Dendritic cell treated with granulocyte-macrophage colony-stimulating factor and Interleukin-4, amounts not matched to agents 40 ng/mL and 50 ng/mL, for 4 days (primary cell): ENCODE measurements at regions of chr19 and their contacts with region 1.

Region 1: GRCh38 chr19:36850559-36851442 is at the start of gene ZNF345:
- H3K4me3 Mint-ChIP-seq: no peak within 1 kb of the TSS
- H3K27ac Mint-ChIP-seq: no peak within 1 kb of the TSS
- H3K4me1 Mint-ChIP-seq: peaks cover 6% of the 10 kb centered on the region
- H3K27me3 Mint-ChIP-seq: no peaks in the 10 kb centered on the region

Region 2: DNA sequence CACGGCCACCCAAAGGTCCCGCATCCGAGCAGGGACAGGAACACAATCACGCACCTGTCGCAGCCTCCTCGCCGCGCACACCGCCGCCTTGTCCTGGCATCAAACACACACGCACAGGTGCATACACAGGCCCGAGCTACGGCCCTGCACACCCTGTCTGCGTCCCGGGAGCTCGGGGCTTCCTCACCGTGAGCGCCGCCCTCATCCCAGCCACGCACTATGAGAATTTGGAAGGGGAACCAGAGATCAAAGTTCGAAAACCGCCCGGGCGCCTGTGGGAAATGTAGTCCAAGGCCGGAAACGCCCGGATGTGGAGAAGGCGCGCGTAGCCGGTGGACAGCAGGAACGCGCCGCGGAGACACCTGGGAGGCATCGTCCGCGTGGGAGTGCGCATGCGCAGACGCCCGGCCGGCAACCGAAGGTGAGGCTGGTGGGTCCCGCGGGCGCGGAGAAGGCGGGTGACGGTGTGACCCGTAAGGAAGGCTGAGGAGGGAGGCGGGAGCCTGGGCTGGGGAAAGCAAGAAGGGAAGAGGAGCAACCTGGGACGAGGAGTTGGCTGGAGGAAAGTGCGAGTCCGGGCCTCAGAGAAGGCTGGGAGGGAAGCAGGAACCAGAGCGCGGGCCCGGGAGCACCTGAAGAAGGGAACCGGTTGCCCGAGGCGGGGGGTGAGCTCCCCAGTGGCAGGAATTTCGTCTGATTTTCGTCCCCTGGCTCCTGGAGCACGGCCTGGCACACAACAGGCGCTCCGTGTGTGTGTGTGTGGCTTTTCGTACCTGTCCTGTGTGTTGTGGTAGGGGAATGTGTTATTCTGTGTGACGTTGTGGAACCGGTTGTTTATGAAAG is 163.4 kb before region 1 on chr19 and contains the start of gene ZNF567:
- intact Hi-C with region 1: loop called (anchors 5 kb)
- H3K4me3 Mint-ChIP-seq: peak within 1 kb of the TSS; percentile 99
- H3K27ac Mint-ChIP-seq: peak within 1 kb of the TSS; percentile 94
- H3K4me1 Mint-ChIP-seq: peaks cover 29% of the 10 kb centered on the region
- H3K27me3 Mint-ChIP-seq: no peaks in the 10 kb centered on the region

Region 3: GRCh38 chr19:36772311-36773222 is 78.2 kb before region 1 on chr19 and contains the start of gene ZNF850:
- intact Hi-C with region 1: loop called (anchors 2 kb)
- H3K4me3 Mint-ChIP-seq: peak within 1 kb of the TSS; percentile 86
- H3K27ac Mint-ChIP-seq: peak within 1 kb of the TSS; percentile 89
- H3K4me1 Mint-ChIP-seq: peaks cover 26% of the 10 kb centered on the region
- H3K27me3 Mint-ChIP-seq: no peaks in the 10 kb centered on the region

Region 4: DNA sequence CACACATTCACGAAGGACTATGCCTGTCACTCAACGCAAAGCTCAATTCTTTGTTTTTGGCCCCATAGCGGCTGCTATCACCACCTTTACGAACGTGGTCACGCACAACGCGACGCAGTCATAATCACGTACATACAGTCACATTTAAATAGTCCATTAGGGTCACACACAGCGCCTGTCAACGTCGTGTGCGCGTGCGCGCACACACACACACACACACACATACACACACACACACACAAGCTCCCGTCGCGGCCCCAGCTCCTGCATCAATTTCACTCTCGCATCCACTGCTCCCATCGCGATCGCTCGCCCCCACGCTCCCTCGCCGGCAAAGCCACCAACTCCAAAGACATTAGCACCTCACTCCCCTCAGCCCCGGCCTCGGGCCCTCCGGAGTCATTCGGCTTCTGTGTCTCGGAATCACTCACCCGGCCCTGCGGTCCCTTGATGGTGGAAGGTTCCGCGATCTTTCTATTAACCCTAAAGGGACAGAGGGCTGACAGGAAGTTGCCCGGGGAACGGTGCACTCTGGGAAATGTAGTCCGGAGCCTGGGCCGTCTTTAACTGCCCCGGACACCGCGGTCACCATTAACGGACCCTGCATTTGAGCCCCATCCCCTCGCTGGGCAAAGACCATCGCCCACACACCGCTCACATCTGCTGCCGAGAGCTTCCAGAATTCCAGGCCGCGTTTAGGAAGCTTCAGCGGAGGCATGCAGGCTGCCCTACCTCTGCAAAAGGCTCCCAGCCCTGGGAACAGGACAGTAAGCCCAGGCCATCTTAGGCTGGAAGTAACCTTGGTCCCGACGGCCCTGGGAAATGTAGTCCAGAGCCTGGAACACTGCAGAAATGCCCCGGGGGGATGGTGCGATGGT is 12.7 kb before region 1 on chr19 and contains the start of gene ZNF790:
- intact Hi-C with region 1: loop called (anchors 1 kb)
- H3K4me3 Mint-ChIP-seq: no peak within 1 kb of the TSS
- H3K27ac Mint-ChIP-seq: no peak within 1 kb of the TSS
- H3K4me1 Mint-ChIP-seq: no peaks in the 10 kb centered on the region
- H3K27me3 Mint-ChIP-seq: no peaks in the 10 kb centered on the region

Region 5: GRCh38 chr19:36915992-36916830 is 65.4 kb after region 1 on chr19 and contains the starts of genes ZNF568 and ZNF829:
- intact Hi-C with region 1: loop called (anchors 1 kb)
- H3K4me3 Mint-ChIP-seq: peak within 1 kb of the TSS; percentile 84
- H3K27ac Mint-ChIP-seq: peak within 1 kb of the TSS; percentile 94
- H3K4me1 Mint-ChIP-seq: peaks cover 22% of the 10 kb centered on the region
- H3K27me3 Mint-ChIP-seq: no peaks in the 10 kb centered on the region

Region 6: GRCh38 chr19:37217855-37218591 is 367.2 kb after region 1 on chr19 and contains the start of gene ZNF383:
- intact Hi-C with region 1: loop called (anchors 5 kb)
- H3K4me3 Mint-ChIP-seq: peak within 1 kb of the TSS; percentile 96
- H3K27ac Mint-ChIP-seq: peak within 1 kb of the TSS; percentile 99
- H3K4me1 Mint-ChIP-seq: peaks cover 19% of the 10 kb centered on the region
- H3K27me3 Mint-ChIP-seq: no peaks in the 10 kb centered on the region